HCT116 (cell line): ENCODE measurements at regions of chr16 and their contacts with region 1.

Region 1: GRCh38 chr16:30032083-30032819 is 1.2 kb upstream of the TLCD3B start:
- DNase-seq: peak; percentile 58
- ATAC-seq: peak; percentile 79
- H3K4me3 ChIP-seq: no peak overlapping the region
- H3K27ac ChIP-seq: no peak overlapping the region
- H3K4me1 ChIP-seq: peaks cover 0 to 5% of the 10 kb centered on the region in 2 experiments; a peak in 2 of 4 replicates
- H3K27me3 ChIP-seq: no peaks in the 10 kb centered on the region
- CTCF ChIP-seq: peak; percentile 86 to 97 (median 87)
- POLR2A ChIP-seq: no peak
- RAD21 ChIP-seq: peak; percentile 95

Region 2: DNA sequence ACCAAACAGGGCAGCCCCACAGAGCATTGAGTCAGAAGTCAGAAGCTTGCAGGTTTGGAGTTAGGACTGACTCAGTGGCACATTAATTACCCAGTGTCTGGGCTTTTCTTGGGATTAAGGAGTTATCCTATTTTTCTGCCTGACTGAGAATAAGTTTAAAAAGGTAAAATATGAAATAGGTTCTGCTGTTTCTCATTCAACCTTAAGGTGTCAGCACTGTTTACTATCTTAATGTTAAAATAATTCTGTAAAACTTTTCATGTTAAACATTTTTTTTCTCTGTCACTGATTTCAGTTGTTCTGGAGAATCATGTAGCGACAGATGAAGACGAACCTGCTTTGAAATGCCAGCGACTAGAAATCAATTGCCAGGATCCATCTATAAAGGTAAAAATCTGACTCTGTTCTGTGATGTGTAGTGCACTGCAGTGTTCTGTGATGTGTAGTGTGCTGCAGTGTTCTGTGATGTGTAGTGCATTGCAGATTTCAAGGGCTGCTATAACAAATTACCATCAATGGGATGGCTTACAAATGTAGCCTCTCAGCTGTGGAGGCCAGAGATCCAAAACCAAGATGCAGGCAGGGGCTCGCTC is 919.4 kb before region 1 on chr16:
- CTCF ChIA-PET with region 1: no interaction called
- POLR2A ChIA-PET with region 1: no interaction called
- RAD21 ChIA-PET with region 1: no interaction called
- intact Hi-C with region 1: loop called (anchors 10 kb)
- DNase-seq: no peak
- ATAC-seq: no peak
- H3K4me3 ChIP-seq: no peak overlapping the region
- H3K27ac ChIP-seq: no peak overlapping the region
- H3K4me1 ChIP-seq: peaks cover 4 to 7% of the 10 kb centered on the region in 2 experiments; a peak in 3 of 4 replicates
- H3K27me3 ChIP-seq: no peaks in the 10 kb centered on the region; the same call in 1 of the 2 replicates
- CTCF ChIP-seq: 0 out of 6 replicates have a peak, but pooled peaks of 1 of the 3 experiments have one; percentile 21
- POLR2A ChIP-seq: no peak
- RAD21 ChIP-seq: no peak

Region 3: DNA sequence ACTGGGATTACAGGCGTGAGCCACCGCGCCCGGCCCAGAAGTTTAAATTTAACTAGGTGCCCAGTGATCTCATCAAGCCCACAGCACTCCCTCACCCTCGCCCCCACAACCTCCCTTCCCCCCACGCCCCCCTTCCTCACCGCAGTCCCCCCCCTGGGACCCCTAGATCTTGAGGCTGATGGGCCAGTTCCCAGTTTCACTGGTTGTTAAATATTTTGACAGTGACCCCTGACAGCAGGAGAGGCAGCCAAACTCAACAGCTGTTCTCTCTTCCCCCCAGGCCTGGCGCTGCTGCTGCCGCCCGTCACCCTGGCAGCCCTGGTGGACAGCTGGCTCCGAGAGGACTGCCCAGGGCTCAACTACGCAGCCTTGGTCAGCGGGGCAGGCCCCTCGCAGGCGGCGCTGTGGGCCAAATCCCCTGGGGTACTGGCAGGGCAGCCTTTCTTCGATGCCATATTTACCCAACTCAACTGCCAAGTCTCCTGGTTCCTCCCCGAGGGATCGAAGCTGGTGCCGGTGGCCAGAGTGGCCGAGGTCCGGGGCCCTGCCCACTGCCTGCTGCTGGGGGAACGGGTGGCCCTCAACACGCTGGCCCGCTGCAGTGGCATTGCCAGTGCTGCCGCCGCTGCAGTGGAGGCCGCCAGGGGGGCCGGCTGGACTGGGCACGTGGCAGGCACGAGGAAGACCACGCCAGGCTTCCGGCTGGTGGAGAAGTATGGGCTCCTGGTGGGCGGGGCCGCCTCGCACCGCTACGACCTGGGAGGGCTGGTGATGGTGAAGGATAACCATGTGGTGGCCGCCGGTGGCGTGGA is 337.7 kb before region 1 on chr16:
- CTCF ChIA-PET with region 1: interaction called, 34 read pairs
- POLR2A ChIA-PET with region 1: no interaction called
- RAD21 ChIA-PET with region 1: interaction called in 1 of 2 experiments, 6 read pairs
- intact Hi-C with region 1: loop called (anchors 2 kb)
- DNase-seq: no peak
- ATAC-seq: no peak
- H3K4me3 ChIP-seq: no peak overlapping the region
- H3K27ac ChIP-seq: no peak overlapping the region
- H3K4me1 ChIP-seq: peaks cover 0 to 6% of the 10 kb centered on the region in 2 experiments; a peak in 2 of 4 replicates
- H3K27me3 ChIP-seq: no peaks in the 10 kb centered on the region
- CTCF ChIP-seq: no peak
- POLR2A ChIP-seq: no peak
- RAD21 ChIP-seq: no peak

Region 4: DNA sequence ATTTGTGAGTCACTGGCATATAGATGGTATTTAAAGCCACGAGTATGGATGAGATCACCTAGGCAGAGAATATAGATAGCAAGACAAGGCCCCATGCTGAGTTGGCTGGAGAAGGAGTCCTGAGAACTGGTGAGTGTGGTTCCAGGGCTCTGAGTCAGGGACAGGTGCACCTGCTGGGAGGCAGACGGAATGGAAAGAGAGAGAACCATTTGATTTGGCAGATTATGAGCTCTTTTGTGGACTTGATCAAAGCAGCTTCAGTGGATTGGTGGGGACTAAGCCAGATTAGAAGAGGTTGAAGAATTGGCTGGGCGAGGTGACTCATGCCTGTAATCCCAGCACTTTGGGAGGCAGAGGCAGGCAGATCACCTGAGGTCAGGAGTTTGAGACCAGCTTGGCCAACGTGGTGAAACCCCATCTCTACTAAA is 13.5 kb before region 1 on chr16:
- CTCF ChIA-PET with region 1: interaction called, 13 read pairs
- POLR2A ChIA-PET with region 1: no interaction called
- RAD21 ChIA-PET with region 1: no interaction called
- intact Hi-C with region 1: no loop called
- DNase-seq: no peak
- ATAC-seq: no peak
- H3K4me3 ChIP-seq: no peak overlapping the region
- H3K27ac ChIP-seq: no peak overlapping the region
- H3K4me1 ChIP-seq: peaks cover 0 to 18% of the 10 kb centered on the region in 2 experiments; a peak in 3 of 4 replicates
- H3K27me3 ChIP-seq: no peaks in the 10 kb centered on the region
- CTCF ChIP-seq: no peak
- POLR2A ChIP-seq: no peak
- RAD21 ChIP-seq: no peak